ENCODE measurements at regions of chr16 and their contacts with region 1.

Region 1: DNA sequence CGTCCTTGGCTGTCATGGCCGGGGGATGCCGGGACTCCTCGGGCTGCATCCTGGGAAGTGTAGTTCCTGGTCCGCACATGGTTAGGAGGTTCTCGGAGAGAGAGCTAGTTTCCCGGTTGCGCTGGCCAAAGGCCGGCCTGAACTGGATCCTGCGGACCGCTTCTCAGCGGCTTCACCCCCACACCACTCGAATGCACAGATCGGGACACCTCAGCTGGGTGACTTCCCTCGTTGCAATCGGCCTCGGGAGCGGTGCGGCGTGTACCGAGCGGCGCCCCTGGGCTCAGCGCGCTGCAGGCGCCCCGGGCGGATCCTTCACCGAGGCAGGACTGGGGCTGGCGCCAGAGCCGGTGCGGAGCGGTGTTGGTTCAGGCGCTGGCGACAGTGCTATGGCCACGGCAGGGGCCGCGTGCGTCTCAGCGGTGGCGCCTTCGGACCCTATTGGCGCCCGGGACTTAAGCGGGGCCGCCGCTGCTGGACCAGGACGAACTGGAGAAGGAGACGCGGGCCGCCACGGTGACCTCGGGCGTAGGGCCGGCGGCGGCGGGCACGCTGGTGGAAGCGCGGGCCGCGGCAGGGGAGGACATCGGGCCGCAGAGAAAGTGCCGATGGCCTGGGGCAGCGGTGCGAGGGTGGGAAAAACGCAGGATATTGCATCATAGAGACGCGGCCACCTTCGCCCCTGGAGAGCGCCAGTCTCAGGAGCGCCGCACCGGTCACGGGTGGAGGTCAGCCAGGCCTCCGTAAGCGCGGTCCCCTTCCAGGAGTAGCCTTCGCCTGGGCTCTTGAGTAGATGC is 11.4 kb downstream of the ZNF629 start:
- DNase-seq: peak; percentile 54
- H3K4me3 Mint-ChIP-seq: peak overlapping the region; percentile 93
- H3K27ac Mint-ChIP-seq: peak overlapping the region; percentile 94
- H3K4me1 Mint-ChIP-seq: peaks cover 12% of the 10 kb centered on the region
- H3K27me3 Mint-ChIP-seq: no peaks in the 10 kb centered on the region

Region 2: DNA sequence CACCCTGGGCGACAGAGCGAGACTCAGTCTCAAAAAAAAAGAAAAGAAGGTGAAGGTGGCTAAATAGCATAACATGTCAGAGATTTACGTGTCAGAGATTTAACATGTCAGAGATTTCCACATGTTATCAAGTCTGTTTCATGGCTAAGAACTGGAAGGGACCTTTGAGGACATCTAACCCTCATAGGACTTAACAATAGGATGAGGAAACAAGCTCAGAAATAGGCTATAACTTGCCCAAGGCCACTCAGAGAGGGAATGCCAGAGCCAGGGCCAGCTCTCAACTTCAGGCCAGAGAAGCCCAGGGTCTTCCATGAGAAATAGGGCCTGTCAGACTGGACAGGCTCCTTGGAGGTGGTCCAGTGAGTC is 38.2 kb after region 1 on chr16:
- intact Hi-C with region 1: loop called (anchors 1 kb)
- DNase-seq: no peak
- H3K4me3 Mint-ChIP-seq: peak overlapping the region; percentile 92
- H3K27ac Mint-ChIP-seq: peak overlapping the region; percentile 74
- H3K4me1 Mint-ChIP-seq: peaks cover 10% of the 10 kb centered on the region
- H3K27me3 Mint-ChIP-seq: no peaks in the 10 kb centered on the region